ENCODE measurements at regions of chr20 and their contacts with region 1.

Region 1: GRCh38 chr20:13243826-13244376 is 22.8 kb downstream of the ISM1 start:
- DNase-seq: no peak
- ATAC-seq: no peak

Region 2: DNA sequence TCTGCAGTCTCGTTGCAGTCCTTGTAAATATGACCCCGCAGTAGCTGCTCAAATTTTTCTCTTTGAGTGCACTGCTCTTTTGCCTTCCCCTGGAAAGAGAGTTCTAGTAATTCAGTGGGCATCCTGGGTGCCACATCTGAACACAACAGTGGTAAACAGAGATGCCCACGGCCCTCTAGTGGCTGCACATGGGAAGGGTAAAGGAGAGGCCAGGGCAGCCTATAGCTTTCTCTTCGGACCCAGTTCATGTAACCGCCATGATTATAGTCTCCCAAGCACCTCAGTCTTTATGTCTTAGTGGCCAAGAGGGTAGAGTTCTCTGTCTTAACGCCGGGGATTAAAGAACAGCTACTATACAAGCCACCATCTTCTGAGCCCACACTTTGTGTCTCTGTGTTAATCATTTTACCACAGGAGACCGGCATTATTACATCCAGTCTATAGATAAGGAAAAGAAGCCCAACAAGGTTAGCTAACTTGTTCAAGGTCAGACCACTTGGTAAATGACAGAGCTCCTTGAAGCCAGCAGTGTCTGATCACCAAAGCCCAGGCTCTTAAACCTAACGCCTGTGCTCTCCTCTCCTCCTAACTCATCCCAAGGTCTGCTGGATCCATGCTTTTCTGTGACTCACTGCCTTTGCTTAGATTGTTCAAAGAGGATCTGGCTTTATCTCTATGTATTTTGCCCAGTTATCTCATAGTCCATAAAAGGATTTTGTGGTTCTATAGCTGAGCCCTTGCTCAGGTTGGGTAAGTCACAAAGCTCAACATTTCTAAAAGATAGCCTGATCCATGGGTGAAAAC is 58.9 kb after region 1 on chr20:
- intact Hi-C with region 1: loop called in 1 of 2 experiments (anchors 10 kb)
- DNase-seq: no peak
- ATAC-seq: peak; percentile 42 to 61